ENCODE measurements at regions of chr7 and their contacts with region 1.

Region 1: DNA sequence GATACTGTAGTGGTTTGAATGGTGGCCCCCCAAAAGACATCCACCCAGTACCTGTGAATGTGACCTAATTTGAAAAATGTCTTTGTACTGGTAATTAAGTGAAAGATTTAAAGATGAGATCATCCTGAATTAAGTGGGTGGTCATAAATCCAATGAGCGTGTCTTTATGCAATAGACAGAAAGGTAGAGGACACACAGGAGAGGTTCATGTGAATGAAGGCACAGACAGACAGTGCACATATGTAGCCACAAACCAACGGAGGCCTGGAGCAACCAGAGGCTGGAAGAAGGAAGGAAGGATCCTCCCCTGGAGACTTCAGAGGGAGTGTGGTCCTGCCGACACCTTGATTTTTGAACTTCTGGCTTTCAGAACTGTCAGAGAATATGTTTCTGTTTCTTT is 160.3 kb downstream of the CNTNAP2 start:
- DNase-seq: no peak
- ATAC-seq: no peak
- H3K4me3 ChIP-seq: no peak overlapping the region
- H3K27ac ChIP-seq: no peak overlapping the region
- H3K4me1 ChIP-seq: no peaks in the 10 kb centered on the region
- H3K27me3 ChIP-seq: no peaks in the 10 kb centered on the region
- CTCF ChIP-seq: no peak
- POLR2A ChIP-seq: no peak
- RAD21 ChIP-seq: no peak

Region 2: DNA sequence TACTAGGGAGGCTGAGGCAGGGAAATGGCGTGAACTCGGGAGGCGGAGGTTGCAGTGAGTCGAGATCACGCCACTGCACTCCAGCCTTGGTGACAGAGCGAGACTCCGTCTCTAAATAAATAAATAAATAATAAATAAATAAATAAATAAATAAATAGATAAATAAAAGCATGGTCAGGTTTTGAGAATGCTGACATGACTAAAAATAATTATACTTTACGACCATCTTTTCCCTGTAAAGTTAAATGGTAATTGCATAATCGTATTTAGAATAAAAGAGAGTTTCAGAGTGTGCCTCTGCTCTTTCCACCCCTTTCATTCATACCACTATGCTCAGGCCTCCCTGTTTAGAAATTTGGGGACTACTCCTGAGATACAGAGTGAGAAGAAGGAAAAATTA is 166.2 kb after region 1 on chr7:
- CTCF ChIA-PET with region 1: no interaction called
- POLR2A ChIA-PET with region 1: no interaction called
- dilution Hi-C with region 1: no loop called
- in situ Hi-C with region 1: no loop called
- intact Hi-C with region 1: no loop called
- DNase-seq: no peak
- ATAC-seq: no peak
- H3K4me3 ChIP-seq: no peak overlapping the region
- H3K27ac ChIP-seq: no peak overlapping the region
- H3K4me1 ChIP-seq: no peaks in the 10 kb centered on the region
- H3K27me3 ChIP-seq: no peaks in the 10 kb centered on the region
- CTCF ChIP-seq: no peak
- POLR2A ChIP-seq: no peak
- RAD21 ChIP-seq: no peak

Region 3: GRCh38 chr7:147412782-147413556 is 1136.1 kb after region 1 on chr7:
- CTCF ChIA-PET with region 1: no interaction called
- POLR2A ChIA-PET with region 1: no interaction called
- dilution Hi-C with region 1: no loop called
- in situ Hi-C with region 1: no loop called
- intact Hi-C with region 1: loop called (anchors 10 kb)
- DNase-seq: peak; percentile 91
- ATAC-seq: peak; percentile 90
- H3K4me3 ChIP-seq: peak overlapping the region; percentile 12; the same call in 1 of the 2 replicates
- H3K27ac ChIP-seq: peak overlapping the region; percentile 92
- H3K4me1 ChIP-seq: peaks cover 21% of the 10 kb centered on the region
- H3K27me3 ChIP-seq: no peaks in the 10 kb centered on the region
- CTCF ChIP-seq: no peak
- POLR2A ChIP-seq: no peak
- RAD21 ChIP-seq: no peak

Measured in IMR-90 (cell line).